AG04450 (cell line): ENCODE measurements at regions of chr6 and their contacts with region 1.

Region 1: DNA sequence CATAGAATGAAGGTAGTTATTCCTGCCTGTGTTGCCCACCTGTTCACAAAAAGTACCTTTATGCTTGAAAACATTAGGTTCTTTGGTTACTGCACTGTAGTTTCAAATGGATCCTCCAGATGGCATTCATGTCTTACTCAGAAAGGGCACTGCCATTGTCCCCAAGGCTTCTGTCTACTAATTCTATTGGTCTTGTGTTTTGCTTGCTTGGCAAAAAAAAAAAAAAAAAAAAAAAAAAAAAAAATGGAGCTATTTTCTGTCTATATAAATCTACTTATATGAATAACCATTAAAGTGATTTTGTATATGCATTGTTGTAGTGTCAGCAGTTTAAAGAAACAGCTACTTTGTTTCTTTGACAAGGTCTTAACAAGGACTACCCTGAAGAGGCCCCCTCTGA is 12.7 kb upstream of the EFHC1 start:
- DNase-seq: no peak
- H3K4me3 ChIP-seq: no peak overlapping the region
- H3K27ac ChIP-seq: no peak overlapping the region
- H3K27me3 ChIP-seq: no peaks in the 10 kb centered on the region
- CTCF ChIP-seq: peak; percentile 58

Region 2: DNA sequence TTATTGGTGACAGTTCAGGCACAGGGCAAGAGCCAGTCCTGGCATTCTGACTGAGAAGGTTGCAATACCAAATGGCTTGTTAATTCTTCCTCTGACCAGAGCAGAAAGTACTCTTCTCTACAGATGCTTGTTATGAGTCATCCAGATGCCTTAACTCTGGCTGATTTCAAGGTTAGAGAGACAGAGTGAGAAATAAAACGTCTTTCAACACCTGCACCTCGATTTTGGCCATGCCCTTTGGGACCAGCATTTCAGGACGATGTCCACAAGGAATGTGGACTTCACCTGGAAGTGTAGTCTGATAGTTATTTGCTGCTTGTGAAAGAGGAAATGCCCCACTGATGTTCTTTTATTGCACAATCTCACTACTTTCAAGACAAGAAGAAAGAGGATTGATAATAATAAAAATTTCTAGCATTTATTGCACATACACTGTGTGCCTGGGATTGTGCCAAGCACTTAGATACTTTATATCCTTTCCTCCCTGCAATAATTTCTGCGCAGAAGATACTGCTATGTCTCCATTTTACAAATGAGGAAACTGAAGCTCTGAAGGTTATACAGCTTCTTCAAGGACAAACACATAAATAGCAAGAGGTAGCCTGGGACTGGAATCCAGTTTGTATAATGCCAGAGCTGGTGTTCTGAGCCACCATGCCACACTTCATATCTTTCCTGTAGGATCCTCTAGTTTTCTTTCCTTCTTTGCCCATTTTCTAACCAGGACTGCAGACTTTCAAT is 89.5 kb before region 1 on chr6:
- CTCF ChIA-PET with region 1: no interaction called
- POLR2A ChIA-PET with region 1: no interaction called
- DNase-seq: peak; percentile 11
- H3K4me3 ChIP-seq: no peak overlapping the region
- H3K27ac ChIP-seq: no peak overlapping the region
- H3K27me3 ChIP-seq: no peaks in the 10 kb centered on the region
- CTCF ChIP-seq: no peak

Region 3: GRCh38 chr6:52419809-52420670 is 12.6 kb after region 1 on chr6 and contains the start of gene EFHC1:
- CTCF ChIA-PET with region 1: interaction called, 15 read pairs
- POLR2A ChIA-PET with region 1: no interaction called
- DNase-seq: peak; percentile 93
- H3K4me3 ChIP-seq: peak within 1 kb of the TSS; percentile 78
- H3K27ac ChIP-seq: peak within 1 kb of the TSS; percentile 69
- H3K27me3 ChIP-seq: no peaks in the 10 kb centered on the region
- CTCF ChIP-seq: no peak
- polyA plus RNA-seq, gene EFHC1: 43.3 and 59.8 TPM in 2 replicates

Region 4: DNA sequence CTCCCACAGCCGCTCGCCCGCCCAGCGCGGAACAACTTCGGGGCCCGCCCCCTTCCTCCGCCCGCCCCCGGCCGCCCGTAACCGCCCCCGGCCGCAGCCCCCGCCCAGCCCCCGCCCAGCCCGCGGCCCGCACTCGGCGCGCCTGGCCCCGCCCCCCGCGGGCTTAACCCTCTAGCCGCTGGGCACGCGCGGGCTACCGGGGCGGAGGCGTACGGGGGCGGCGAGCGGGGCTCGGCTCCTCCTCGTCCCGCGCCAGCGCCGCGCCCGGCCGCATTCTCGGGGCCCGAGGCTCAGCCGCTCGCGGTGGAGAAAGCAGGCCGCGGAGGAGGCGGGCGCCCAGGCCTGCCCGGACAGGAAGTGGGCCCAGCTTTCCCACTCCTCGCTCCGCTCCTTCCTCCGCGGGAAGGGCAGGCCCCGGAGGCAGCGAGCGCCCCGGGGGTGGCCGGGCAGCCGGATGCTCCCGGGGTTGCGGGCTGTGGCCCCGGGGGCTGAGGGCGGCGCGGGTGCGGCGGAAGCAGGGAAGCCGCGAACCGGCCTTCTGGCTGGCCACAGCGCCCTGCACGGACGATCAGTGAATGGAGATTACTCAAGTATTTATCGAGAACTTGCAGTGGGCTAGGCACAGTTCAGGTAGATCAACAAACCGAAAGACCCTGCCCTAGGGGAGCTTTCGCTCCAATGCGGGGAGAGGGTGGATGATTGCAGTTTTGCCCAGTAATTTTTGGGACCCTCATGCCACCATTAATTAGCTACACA is 169.7 kb after region 1 on chr6 and contains the start of gene TRAM2:
- CTCF ChIA-PET with region 1: interaction called, 10 read pairs
- POLR2A ChIA-PET with region 1: interaction called, 3 read pairs
- DNase-seq: no peak
- H3K4me3 ChIP-seq: peak within 1 kb of the TSS; percentile 94
- H3K27ac ChIP-seq: peak within 1 kb of the TSS; percentile 89
- H3K27me3 ChIP-seq: no peaks in the 10 kb centered on the region
- CTCF ChIP-seq: no peak
- polyA plus RNA-seq, gene TRAM2: 134 and 152 TPM in 2 replicates

Region 5: GRCh38 chr6:52598123-52598823 is 190.8 kb after region 1 on chr6:
- CTCF ChIA-PET with region 1: interaction called, 21 read pairs
- POLR2A ChIA-PET with region 1: no interaction called
- DNase-seq: no peak
- H3K4me3 ChIP-seq: no peak overlapping the region
- H3K27ac ChIP-seq: no peak overlapping the region
- H3K27me3 ChIP-seq: no peaks in the 10 kb centered on the region
- CTCF ChIP-seq: peak; percentile 86

Region 6: GRCh38 chr6:52647199-52647598 is 239.7 kb after region 1 on chr6:
- CTCF ChIA-PET with region 1: interaction called, 16 read pairs
- POLR2A ChIA-PET with region 1: no interaction called
- DNase-seq: no peak
- H3K4me3 ChIP-seq: no peak overlapping the region
- H3K27ac ChIP-seq: no peak overlapping the region
- H3K27me3 ChIP-seq: no peaks in the 10 kb centered on the region
- CTCF ChIP-seq: no peak

Region 7: DNA sequence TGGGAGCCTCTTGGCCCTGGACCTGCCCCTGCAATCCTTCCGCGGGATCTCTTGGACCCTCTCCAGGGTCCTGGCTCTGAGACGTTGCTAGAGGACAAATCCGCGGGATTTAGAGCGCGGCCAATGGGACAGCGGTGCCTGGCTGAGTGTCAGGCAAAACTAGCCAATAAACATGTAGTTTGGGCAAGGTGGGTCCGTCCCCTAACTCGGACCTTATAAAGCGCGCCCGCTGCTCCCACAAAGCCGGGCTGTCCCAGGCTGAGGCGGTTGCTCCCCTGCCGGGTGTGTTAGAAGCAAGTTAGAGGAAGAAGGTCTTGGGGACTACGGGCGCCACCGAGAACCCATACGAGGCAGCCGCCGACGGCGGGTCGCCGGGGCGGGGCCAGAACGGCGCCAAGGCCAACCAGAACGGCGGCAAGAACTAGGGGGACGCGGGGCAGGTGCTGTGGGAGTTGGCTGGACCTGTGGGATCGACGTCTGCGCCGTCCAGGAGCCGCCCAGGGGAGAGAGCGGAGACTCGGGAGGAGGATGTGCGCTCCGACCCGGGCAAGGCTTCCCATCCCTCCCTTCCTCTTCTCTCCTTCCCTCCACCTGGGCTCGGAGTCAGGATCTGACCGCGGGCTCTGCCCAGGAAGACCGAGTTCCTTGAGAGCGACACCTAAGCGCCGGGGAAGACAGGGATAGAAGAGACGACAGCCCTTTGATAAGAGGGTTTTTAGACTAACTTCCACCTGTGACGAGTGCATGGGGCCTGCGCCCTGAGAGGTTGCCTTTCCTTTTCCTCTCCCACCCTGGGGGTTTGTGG is 256.9 kb after region 1 on chr6:
- CTCF ChIA-PET with region 1: interaction called, 89 read pairs
- POLR2A ChIA-PET with region 1: no interaction called
- DNase-seq: peak; percentile 88
- H3K4me3 ChIP-seq: peak overlapping the region; percentile 76
- H3K27ac ChIP-seq: no peak overlapping the region
- H3K27me3 ChIP-seq: no peaks in the 10 kb centered on the region
- CTCF ChIP-seq: no peak